Activated CD4-positive, alpha-beta memory T cell treated with anti-CD3 and anti-CD28 coated beads, Interleukin-2, amount 10 ng/mL, durations not matched to agents 7 days and 5 days (primary cell): ENCODE measurements at regions of chr2 and their contacts with region 1.

Region 1: GRCh38 chr2:101012706-101013181 is 10.7 kb downstream of the RPL31 start:
- DNase-seq: peak; percentile 25
- H3K4me3 Mint-ChIP-seq: no peak overlapping the region
- H3K27ac Mint-ChIP-seq: no peak overlapping the region
- H3K4me1 Mint-ChIP-seq: peaks cover 32% of the 10 kb centered on the region
- H3K27me3 Mint-ChIP-seq: no peaks in the 10 kb centered on the region

Region 2: GRCh38 chr2:101151141-101151858 is 138.6 kb after region 1 on chr2 and contains the start of gene TBC1D8:
- CTCF ChIA-PET with region 1: interaction called, 11 read pairs
- POLR2A ChIA-PET with region 1: no interaction called
- DNase-seq: peak; percentile 72
- H3K4me3 Mint-ChIP-seq: peak within 1 kb of the TSS; percentile 73
- H3K27ac Mint-ChIP-seq: no peak within 1 kb of the TSS
- H3K4me1 Mint-ChIP-seq: peaks cover 17% of the 10 kb centered on the region
- H3K27me3 Mint-ChIP-seq: peaks cover 67% of the 10 kb centered on the region
- total RNA-seq, gene TBC1D8: 0.58 to 0.63 TPM